ENCODE measurements at regions of chr20 and their contacts with region 1.

Region 1: DNA sequence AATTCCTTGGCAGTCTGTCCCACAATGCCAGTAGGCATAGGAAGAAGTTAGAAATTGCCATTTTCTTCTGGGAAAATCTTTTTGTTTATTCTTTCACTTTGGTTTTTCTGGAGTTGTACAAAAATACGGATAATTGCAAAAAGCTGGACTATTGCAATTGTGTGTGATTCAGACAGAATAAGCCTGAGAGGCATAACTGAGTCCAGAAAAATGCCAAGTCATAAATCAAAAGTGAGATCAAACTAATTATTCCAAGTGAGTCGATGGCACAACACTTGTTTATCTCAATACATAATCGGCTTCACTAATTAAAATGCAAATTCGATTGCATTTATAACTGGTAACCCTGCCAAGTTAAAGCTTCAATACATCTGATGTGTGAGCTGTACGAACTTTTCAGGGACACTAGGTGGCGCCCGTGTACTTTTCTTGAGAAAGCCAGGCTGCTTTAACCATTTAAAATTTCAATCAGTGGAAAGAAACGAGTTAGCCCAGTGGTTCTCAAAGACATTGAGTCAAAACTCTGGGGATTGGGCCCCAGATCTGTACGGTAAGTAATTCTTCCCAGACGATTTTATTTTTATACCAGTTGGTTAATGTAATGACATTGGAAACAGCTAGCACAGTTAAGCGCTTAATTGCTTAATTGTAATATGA is 102.6 kb downstream of the LAMP5 start:
- DNase-seq: peak; percentile 77
- H3K4me3 ChIP-seq: no peak overlapping the region
- H3K27ac ChIP-seq: no peak overlapping the region
- H3K4me1 ChIP-seq: no peaks in the 10 kb centered on the region
- H3K27me3 ChIP-seq: no peaks in the 10 kb centered on the region
- CTCF ChIP-seq: peak; percentile 91

Region 2: DNA sequence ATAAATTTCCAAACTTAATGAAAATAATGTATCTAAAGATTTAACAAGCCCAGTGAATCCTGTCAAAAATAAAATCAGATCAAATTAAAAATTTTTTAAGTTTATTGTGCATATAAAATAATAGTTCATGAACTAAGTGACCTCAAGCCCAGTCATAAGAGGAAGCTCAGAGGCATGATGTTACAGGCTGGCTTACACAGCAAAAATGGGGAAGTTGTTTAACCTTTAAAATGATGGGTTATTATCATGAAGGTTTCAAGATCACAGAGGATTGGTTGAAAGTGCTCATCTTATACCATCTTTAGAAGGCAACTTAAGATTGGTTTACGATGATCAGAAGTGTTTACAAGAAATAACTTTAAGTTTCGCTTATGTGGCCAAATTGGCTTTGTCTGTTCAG is 119.4 kb after region 1 on chr20:
- CTCF ChIA-PET with region 1: interaction called, 15 read pairs
- POLR2A ChIA-PET with region 1: interaction called, 3 read pairs
- intact Hi-C with region 1: no loop called
- DNase-seq: no peak
- H3K4me3 ChIP-seq: no peak overlapping the region
- H3K27ac ChIP-seq: no peak overlapping the region
- H3K4me1 ChIP-seq: no peaks in the 10 kb centered on the region
- H3K27me3 ChIP-seq: peaks cover 29% of the 10 kb centered on the region
- CTCF ChIP-seq: no peak

Region 3: DNA sequence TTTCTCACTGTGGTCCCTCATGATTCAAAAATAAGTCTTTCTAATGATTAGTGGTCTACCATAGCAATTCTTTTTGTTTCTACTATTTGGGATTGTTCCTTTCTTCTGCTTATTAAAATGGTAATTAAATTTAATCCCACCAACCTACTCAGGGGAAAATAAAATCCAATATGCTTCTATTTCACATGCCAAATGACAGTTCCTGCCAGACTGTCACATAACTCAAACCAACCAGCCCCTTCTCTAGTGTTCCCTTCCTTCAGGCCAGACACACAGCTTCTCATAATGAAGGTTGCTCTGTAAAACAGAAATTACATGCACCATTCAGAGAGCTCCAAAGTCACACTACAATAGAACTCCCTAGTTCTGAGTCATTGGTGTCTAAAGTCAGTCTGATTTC is 198.7 kb after region 1 on chr20:
- CTCF ChIA-PET with region 1: no interaction called
- POLR2A ChIA-PET with region 1: no interaction called
- intact Hi-C with region 1: no loop called
- DNase-seq: no peak
- H3K4me3 ChIP-seq: no peak overlapping the region
- H3K27ac ChIP-seq: no peak overlapping the region
- H3K4me1 ChIP-seq: no peaks in the 10 kb centered on the region
- H3K27me3 ChIP-seq: peaks cover 27% of the 10 kb centered on the region
- CTCF ChIP-seq: no peak

Region 4: GRCh38 chr20:9912858-9913434 is 296.0 kb after region 1 on chr20:
- CTCF ChIA-PET with region 1: interaction called, 25 read pairs
- POLR2A ChIA-PET with region 1: no interaction called
- intact Hi-C with region 1: loop called (anchors 2 kb)
- DNase-seq: peak; percentile 64
- H3K4me3 ChIP-seq: no peak overlapping the region
- H3K27ac ChIP-seq: no peak overlapping the region
- H3K4me1 ChIP-seq: no peaks in the 10 kb centered on the region
- H3K27me3 ChIP-seq: peaks cover 43% of the 10 kb centered on the region
- CTCF ChIP-seq: peak; percentile 89

Region 5: GRCh38 chr20:10090588-10091166 is 473.7 kb after region 1 on chr20:
- CTCF ChIA-PET with region 1: interaction called, 4 read pairs
- POLR2A ChIA-PET with region 1: no interaction called
- intact Hi-C with region 1: loop called (anchors 2 kb)
- DNase-seq: peak; percentile 66
- H3K4me3 ChIP-seq: no peak overlapping the region
- H3K27ac ChIP-seq: no peak overlapping the region
- H3K4me1 ChIP-seq: no peaks in the 10 kb centered on the region
- H3K27me3 ChIP-seq: no peaks in the 10 kb centered on the region
- CTCF ChIP-seq: peak; percentile 79

Region 6: GRCh38 chr20:10475225-10475624 is 858.3 kb after region 1 on chr20:
- CTCF ChIA-PET with region 1: interaction called, 12 read pairs
- POLR2A ChIA-PET with region 1: no interaction called
- intact Hi-C with region 1: no loop called
- DNase-seq: peak; percentile 62
- H3K4me3 ChIP-seq: no peak overlapping the region
- H3K27ac ChIP-seq: peak overlapping the region; percentile 39
- H3K4me1 ChIP-seq: peaks cover 36% of the 10 kb centered on the region
- H3K27me3 ChIP-seq: no peaks in the 10 kb centered on the region
- CTCF ChIP-seq: no peak

Region 7: DNA sequence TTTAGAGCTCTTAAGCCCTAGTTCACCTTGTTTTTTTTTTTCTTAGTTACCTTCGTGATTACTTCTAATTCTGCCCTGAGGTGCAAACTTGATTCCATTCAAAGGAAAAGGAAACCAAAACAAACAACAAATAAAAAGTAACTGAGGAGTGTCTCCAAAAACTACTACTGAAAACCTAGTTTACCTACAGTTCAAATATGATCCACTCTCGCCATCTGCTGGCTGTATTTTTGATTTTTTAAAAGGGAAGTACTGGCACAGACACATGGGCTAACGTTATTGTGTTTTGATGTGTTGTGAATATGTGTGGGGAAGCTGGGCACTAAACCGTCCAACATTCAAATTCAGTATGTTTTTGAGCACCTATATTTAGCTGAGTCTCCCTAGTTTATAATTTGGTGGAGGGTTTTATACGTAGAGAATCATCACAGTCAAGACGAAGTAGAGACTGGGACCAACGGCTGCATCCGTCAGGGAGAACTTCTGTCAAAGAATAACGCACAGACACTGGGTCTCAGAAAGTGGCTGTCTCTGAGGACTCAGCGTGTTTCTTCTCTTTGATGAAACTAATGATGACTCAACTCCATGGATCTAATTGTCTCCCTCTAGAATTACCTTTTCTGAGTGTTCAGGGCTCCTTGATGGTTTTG is 1927.2 kb after region 1 on chr20:
- CTCF ChIA-PET with region 1: no interaction called
- POLR2A ChIA-PET with region 1: no interaction called
- intact Hi-C with region 1: loop called (anchors 10 kb)
- DNase-seq: peak; percentile 85
- H3K4me3 ChIP-seq: no peak overlapping the region
- H3K27ac ChIP-seq: no peak overlapping the region
- H3K4me1 ChIP-seq: peaks cover 7% of the 10 kb centered on the region
- H3K27me3 ChIP-seq: no peaks in the 10 kb centered on the region
- CTCF ChIP-seq: peak; percentile 65